SK-N-SH (cell line): ENCODE measurements at regions of chr1 and their contacts with region 1.

Region 1: GRCh38 chr1:27357281-27358037 is 9.3 kb downstream of the MAP3K6 start:
- DNase-seq: peak; percentile 97
- H3K4me3 ChIP-seq: peak overlapping the region in 1 of 2 experiments; percentile 48; a peak in 1 of 4 replicates
- H3K27ac ChIP-seq: no peak overlapping the region
- H3K4me1 ChIP-seq: peaks cover 0 to 5% of the 10 kb centered on the region in 2 experiments; a peak in 1 of 4 replicates
- H3K27me3 ChIP-seq: no peaks in the 10 kb centered on the region
- CTCF ChIP-seq: peak; percentile 89
- EP300 ChIP-seq: no peak
- RAD21 ChIP-seq: peak; percentile 65

Region 2: DNA sequence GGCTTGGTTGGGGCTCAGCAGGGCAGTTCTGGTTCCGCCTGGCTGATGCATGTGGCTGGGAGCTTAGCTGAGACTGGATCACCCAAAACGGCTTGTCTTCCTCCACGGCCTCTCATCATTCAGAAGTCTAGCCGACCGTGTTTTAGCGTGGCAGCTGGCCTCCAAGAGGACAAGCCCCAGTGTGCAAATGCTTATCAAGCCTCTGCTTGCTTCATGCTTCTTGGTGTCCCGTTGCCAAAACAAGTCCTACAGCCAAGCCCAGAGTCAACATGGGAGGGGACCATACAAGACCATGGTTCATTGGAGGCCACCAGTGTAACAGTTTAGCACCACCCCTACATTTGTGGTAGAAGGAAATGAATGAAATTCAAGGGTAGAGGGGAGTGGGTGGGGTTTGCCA is 386.6 kb before region 1 on chr1:
- CTCF ChIA-PET with region 1: no interaction called
- POLR2A ChIA-PET with region 1: no interaction called
- DNase-seq: no peak
- H3K4me3 ChIP-seq: no peak overlapping the region
- H3K27ac ChIP-seq: no peak overlapping the region
- H3K4me1 ChIP-seq: no peaks in the 10 kb centered on the region
- H3K27me3 ChIP-seq: peaks cover 7% of the 10 kb centered on the region; the same call in 1 of the 2 replicates
- CTCF ChIP-seq: no peak
- EP300 ChIP-seq: no peak
- RAD21 ChIP-seq: no peak

Region 3: GRCh38 chr1:27275696-27276095 is 81.8 kb before region 1 on chr1:
- CTCF ChIA-PET with region 1: no interaction called
- POLR2A ChIA-PET with region 1: no interaction called
- DNase-seq: no peak
- H3K4me3 ChIP-seq: no peak overlapping the region
- H3K27ac ChIP-seq: no peak overlapping the region
- H3K4me1 ChIP-seq: no peaks in the 10 kb centered on the region
- H3K27me3 ChIP-seq: no peaks in the 10 kb centered on the region
- CTCF ChIP-seq: no peak
- EP300 ChIP-seq: no peak
- RAD21 ChIP-seq: no peak

Region 4: DNA sequence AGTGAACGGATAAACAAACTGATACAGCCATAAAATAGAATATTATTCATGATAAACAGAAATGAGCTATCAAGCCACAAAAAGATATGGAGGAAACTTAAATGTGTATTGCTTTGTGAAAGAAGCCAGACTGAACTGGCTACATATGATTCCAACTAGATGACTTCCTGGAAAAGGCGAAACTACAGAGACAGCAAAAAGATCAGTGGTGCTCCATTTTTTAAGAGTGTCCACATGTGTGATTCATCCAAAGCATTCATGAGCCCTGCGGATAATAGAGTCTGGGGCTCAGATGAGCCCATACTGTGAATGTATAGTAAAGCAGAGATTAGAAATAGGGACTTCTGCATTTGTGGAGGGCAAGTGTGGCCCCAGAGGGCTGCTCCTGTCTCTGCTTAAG is 43.3 kb before region 1 on chr1:
- CTCF ChIA-PET with region 1: interaction called, 11 read pairs
- POLR2A ChIA-PET with region 1: no interaction called
- DNase-seq: no peak
- H3K4me3 ChIP-seq: no peak overlapping the region
- H3K27ac ChIP-seq: no peak overlapping the region
- H3K4me1 ChIP-seq: peaks cover 6 to 15% of the 10 kb centered on the region in 2 experiments; a peak in 2 of 4 replicates
- H3K27me3 ChIP-seq: no peaks in the 10 kb centered on the region
- CTCF ChIP-seq: no peak
- EP300 ChIP-seq: no peak
- RAD21 ChIP-seq: no peak

Region 5: GRCh38 chr1:27332536-27333281 is 24.8 kb before region 1 on chr1:
- CTCF ChIA-PET with region 1: interaction called, 85 read pairs
- POLR2A ChIA-PET with region 1: no interaction called
- DNase-seq: peak; percentile 87
- H3K4me3 ChIP-seq: no peak overlapping the region; a peak in 1 of 4 replicates
- H3K27ac ChIP-seq: no peak overlapping the region
- H3K4me1 ChIP-seq: no peaks in the 10 kb centered on the region
- H3K27me3 ChIP-seq: no peaks in the 10 kb centered on the region
- CTCF ChIP-seq: peak; percentile 85
- EP300 ChIP-seq: no peak
- RAD21 ChIP-seq: peak; percentile 48

Region 6: DNA sequence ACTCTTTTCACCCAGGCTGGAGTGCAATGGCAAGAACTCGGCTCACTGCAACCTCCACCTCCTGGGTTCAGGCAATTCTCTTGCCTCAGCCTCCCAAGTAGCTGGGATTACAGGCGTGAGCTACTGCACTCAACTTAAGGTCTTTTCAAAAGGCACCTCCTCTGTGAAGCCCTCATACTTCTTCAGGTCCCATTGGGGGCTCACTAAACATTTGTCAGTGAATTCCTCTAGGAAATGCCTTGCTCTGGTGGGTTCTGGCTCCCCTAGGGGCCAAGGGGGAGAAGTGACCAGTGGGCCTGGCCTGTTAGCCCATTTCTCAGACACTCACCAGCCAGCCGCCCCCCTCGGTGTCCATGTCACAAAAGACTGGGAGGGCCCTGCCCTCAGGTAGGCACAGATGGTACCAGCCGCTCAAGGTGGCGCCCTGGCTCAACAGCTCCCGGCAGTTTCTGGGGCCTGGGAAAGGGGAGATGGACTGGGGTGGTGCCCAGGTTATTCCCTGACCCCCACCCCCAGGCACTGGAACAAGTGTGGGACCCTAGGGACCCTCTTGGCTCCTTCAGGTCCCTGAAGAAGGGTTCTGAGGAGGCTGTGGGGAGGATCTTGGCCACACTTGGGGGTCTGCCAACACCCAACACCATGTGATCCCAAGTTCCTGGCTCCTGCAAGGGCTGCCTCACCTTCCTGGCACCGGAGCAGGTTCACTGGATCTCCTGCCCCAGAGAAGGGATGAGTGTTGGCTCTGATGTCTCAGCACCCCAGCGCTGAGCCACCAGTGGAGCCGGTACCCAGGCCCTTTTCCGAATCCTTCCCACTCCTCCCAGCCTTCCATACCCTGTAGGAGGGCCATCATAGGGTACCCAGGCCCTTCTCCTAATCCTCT is 15.6 kb after region 1 on chr1:
- CTCF ChIA-PET with region 1: interaction called, 19 read pairs
- POLR2A ChIA-PET with region 1: no interaction called
- DNase-seq: peak; percentile 61
- H3K4me3 ChIP-seq: no peak overlapping the region
- H3K27ac ChIP-seq: no peak overlapping the region
- H3K4me1 ChIP-seq: no peaks in the 10 kb centered on the region
- H3K27me3 ChIP-seq: no peaks in the 10 kb centered on the region
- CTCF ChIP-seq: peak; percentile 44
- EP300 ChIP-seq: no peak
- RAD21 ChIP-seq: peak; percentile 9; the same call in 1 of the 2 replicates

Region 7: DNA sequence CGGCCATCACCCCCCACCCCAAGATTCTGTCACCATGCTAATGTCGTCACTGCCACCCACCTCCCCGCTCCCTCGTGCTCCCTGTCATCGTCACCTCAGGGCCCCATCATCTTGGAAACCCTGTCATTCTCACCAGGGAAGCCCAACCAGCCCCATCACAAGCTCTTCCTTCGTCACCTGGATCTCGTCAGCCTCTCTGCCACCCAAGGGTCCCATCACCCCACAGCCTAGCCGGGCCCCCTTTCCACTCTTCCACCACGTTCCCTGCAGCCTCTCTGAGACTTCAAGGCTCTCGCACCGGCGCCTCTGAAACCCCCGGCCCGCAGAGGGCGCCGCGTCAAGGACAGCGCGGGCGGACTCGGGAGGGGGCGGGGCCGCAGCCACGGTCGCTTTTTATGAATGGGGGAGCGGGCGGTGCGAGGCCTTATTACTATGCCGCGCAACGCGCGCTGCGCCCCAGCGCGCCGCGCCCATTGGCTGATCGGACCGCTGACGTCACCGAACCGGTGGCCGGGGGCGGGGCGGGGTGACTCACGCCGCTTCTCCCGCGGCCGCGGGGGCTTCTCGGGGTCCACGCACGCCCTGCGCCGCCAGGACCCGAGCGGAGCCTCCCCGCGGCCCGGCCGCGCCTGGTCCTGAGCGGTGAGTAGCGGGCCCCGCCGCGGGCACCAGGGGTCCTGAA is 34.8 kb after region 1 on chr1 and contains the start of gene GPR3:
- CTCF ChIA-PET with region 1: interaction called, 48 read pairs
- POLR2A ChIA-PET with region 1: no interaction called
- DNase-seq: peak; percentile 99
- H3K4me3 ChIP-seq: peak within 1 kb of the TSS; percentile 71 to 94
- H3K27ac ChIP-seq: peak within 1 kb of the TSS; percentile 34 to 60; a peak in 2 of 4 replicates
- H3K4me1 ChIP-seq: peaks cover 0 to 28% of the 10 kb centered on the region in 2 experiments; a peak in 2 of 4 replicates
- H3K27me3 ChIP-seq: no peaks in the 10 kb centered on the region; the same call in 1 of the 2 replicates
- CTCF ChIP-seq: peak; percentile 64
- EP300 ChIP-seq: no peak
- RAD21 ChIP-seq: peak; percentile 45
- polyA plus RNA-seq, gene GPR3: 5.8 and 6.0 TPM in 2 replicates

Region 8: DNA sequence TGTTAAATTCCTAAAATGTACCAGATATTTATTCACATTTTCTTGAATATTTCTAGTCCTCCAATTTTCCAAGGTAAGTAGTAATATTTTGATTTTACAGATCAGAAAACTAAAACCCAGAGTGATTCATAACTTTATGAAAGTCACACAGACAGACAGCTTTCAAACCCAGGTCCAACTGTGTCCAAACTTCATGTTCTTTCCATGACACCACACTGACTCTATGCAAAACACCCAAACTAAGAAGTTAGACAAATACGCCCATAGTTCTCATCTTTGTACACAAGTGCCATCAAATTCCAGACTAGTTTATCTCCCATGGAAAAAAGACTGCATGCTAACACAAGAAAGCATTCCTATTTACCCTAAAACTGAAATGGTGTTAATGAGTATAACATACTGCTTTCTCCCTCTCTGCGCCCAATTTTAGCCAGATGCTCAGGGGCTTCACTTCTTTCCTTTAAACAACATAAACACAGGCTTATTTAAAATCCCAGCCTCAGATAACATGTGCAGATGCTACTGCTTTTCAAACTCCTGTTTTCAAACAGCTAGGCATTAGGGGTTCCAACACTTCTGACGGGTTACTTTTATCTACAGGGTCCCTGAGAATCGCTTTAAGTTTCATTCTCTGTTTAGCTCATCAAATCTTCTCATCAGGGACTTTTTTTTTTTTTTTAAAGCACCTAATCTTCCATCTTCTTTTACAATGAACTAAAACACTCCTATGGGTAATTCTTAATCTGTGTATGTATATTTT is 87.9 kb after region 1 on chr1:
- CTCF ChIA-PET with region 1: no interaction called
- POLR2A ChIA-PET with region 1: no interaction called
- DNase-seq: no peak
- H3K4me3 ChIP-seq: no peak overlapping the region
- H3K27ac ChIP-seq: no peak overlapping the region
- H3K4me1 ChIP-seq: no peaks in the 10 kb centered on the region; a peak in 1 of 4 replicates
- H3K27me3 ChIP-seq: no peaks in the 10 kb centered on the region
- CTCF ChIP-seq: no peak
- EP300 ChIP-seq: no peak
- RAD21 ChIP-seq: no peak

Region 9: GRCh38 chr1:27630859-27631491 is 273.5 kb after region 1 on chr1:
- CTCF ChIA-PET with region 1: interaction called, 10 read pairs
- POLR2A ChIA-PET with region 1: no interaction called
- DNase-seq: no peak
- H3K4me3 ChIP-seq: no peak overlapping the region
- H3K27ac ChIP-seq: no peak overlapping the region
- H3K4me1 ChIP-seq: peaks cover 0 to 6% of the 10 kb centered on the region in 2 experiments; a peak in 1 of 4 replicates
- H3K27me3 ChIP-seq: no peaks in the 10 kb centered on the region
- CTCF ChIP-seq: no peak
- EP300 ChIP-seq: no peak
- RAD21 ChIP-seq: no peak